Heart left ventricle (tissue), 16 donors: ENCODE measurements at regions of chr10 and their contacts with region 1.

Region 1: DNA sequence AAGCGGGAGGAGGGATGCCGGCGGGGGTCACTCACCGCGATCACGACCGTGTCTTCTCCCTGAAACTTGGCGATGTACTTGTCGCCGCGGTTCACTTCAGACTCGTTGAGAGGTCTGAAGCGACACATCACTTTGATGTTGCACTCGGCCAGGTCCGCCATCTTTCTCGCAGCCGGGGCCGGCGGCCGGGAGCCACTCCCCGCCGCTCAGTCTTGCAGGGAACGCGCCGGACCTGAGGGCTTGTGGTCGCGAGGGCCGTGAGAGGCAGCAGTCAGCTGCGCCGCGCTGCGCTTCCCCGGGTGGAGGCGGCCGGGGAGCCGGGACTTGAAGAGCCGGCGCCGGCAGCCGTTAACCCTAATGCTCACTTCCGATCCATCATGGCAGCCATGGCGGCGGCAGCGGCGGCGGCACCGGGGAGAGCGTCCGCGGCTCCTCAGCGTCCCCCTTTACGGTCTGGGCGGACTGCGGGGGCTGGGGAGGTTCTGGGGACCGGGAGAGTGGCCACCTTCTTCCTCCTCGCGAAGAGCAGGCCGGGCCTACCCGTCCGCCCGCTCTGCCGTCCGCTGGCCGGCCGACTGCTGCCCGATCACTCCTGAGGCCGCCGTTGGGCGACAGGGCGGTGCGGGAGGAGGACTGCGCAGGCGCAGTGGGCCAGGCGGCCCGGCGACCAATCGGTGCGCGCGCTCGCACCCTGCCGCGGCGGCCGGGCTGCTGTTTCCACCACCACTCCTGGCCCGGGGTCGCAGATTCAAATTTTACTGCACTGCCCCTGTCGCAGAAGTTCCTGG is at the start of gene KIF5B:
- DNase-seq: peak; percentile 90 to 97 (median 92)
- ATAC-seq: peak; percentile 83 to 96 (median 94)
- H3K4me3 ChIP-seq: peak within 1 kb of the TSS; percentile 61 to 95 (median 89)
- H3K27ac ChIP-seq: peak within 1 kb of the TSS; percentile 93 to 100 (median 98)
- H3K4me1 ChIP-seq: peaks cover 0 to 46% (median 32%) of the 10 kb centered on the region in 12 donors
- H3K27me3 ChIP-seq: no peaks in the 10 kb centered on the region
- CTCF ChIP-seq: peak in 3 of 12 donors; percentile 7 to 14 (median 8)
- POLR2A ChIP-seq: peak; percentile 91 to 97
- total RNA-seq, gene KIF5B: 108 to 178 (median 150) TPM

Region 2: GRCh38 chr10:31928549-31929260 is 127.3 kb before region 1 on chr10 and contains the start of gene ARHGAP12:
- intact Hi-C with region 1: loop called in 1 of 10 experiments (anchors 5 kb)
- DNase-seq: peak; percentile 92 to 96 (median 93)
- ATAC-seq: peak; percentile 88 to 97 (median 96)
- H3K4me3 ChIP-seq: peak within 1 kb of the TSS; percentile 66 to 97 (median 90)
- H3K27ac ChIP-seq: peak within 1 kb of the TSS; percentile 72 to 99 (median 96)
- H3K4me1 ChIP-seq: peaks cover 0 to 49% (median 28%) of the 10 kb centered on the region in 12 donors
- H3K27me3 ChIP-seq: no peaks in the 10 kb centered on the region
- CTCF ChIP-seq: peak in 2 of 12 donors; percentile 2 to 19
- POLR2A ChIP-seq: peak; percentile 78 to 95
- total RNA-seq, gene ARHGAP12: 17.6 to 27.6 (median 21.2) TPM

Region 3: GRCh38 chr10:32125023-32125422 is 69.0 kb after region 1 on chr10:
- intact Hi-C with region 1: no loop called
- DNase-seq: no peak
- ATAC-seq: no peak
- H3K4me3 ChIP-seq: no peak overlapping the region
- H3K27ac ChIP-seq: no peak overlapping the region
- H3K4me1 ChIP-seq: no peaks in the 10 kb centered on the region
- H3K27me3 ChIP-seq: no peaks in the 10 kb centered on the region
- CTCF ChIP-seq: no peak
- POLR2A ChIP-seq: no peak

Region 4: DNA sequence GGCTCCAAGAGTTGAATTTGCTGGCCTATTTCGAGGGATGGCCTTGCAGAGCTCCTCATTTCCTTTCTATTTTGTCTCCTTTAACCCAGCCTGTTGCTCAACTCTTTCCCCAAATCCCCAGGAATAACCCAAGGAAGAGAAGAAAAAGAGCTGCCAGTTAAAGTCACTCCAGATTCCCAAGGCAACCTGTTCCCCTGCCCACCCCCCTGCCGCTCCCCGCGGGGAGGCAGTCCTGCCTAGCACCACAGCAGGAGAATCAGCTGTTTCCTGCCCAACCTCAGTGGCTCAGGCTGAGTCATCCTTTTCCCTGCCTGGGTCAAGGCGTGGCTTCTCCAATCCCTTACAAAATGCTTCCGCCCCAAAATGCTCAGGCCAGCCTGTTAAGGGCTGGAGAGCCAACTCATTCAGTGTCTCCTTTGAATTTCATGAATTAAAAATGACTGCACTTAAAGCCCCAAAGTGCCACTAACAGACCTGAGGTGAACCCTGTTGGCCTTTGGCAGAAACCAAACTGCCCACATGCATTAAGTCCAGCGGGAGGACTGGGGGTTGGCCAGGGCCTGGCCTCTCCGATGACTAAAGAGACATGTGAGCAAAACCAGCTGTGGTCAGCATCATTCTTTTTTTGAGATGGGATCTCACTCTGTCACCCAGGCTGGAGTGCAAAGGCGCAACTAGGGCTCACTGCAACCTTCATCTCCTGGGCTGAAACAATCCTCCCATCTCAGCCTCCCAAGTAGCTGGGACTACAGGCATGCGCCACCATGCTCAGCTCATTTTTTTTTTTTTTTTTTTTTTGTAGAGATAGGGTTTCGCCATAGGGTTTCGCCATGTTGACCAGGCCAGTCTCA is 83.4 kb after region 1 on chr10:
- intact Hi-C with region 1: loop called in 4 of 10 experiments (anchors 5 to 10 kb)
- DNase-seq: peak; percentile 84 to 91 (median 87)
- ATAC-seq: peak; percentile 82 to 98 (median 94)
- H3K4me3 ChIP-seq: no peak overlapping the region
- H3K27ac ChIP-seq: peak overlapping the region in 11 of 12 donors; percentile 47 to 92 (median 71)
- H3K4me1 ChIP-seq: peaks cover 0 to 40% (median 19%) of the 10 kb centered on the region in 12 donors
- H3K27me3 ChIP-seq: no peaks in the 10 kb centered on the region
- CTCF ChIP-seq: peak in 5 of 12 donors; percentile 16 to 39 (median 33)
- POLR2A ChIP-seq: no peak

Region 5: DNA sequence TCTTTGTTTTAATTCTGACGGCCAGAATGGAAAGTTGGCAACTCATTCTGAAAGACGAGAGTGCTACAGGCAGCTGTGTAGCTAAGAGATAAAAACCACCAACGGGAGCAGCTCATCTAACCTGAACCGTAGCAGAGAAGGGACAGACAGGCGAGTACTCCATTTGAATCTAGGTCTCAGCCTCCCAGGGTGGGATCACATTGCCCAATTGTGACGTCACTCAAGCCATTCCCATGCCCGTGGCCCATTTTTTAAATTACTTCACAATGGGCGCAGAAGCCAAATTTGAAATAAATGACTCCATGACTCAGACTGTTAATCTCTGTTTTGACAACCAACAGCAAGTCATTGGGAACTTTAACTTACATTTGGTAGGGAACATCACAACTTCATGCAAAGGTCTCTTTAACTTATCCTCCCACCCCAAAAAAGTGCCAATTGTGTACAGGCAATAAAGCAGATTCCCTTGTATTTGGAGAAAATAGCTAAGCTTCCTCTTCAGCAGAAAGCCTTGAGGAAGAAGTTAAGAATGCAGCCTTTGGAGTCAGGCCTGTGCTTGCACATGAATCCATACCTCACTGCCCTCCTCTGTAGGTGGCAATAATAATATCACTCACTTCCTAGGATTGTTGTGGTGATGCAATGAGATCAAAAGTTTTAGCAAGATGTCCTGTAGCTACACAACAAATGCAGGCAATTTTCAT is 93.4 kb after region 1 on chr10:
- intact Hi-C with region 1: loop called in 4 of 10 experiments (anchors 5 to 10 kb)
- DNase-seq: peak in 4 of 5 donors; percentile 66 to 74 (median 68)
- ATAC-seq: peak; percentile 93 to 97 (median 96)
- H3K4me3 ChIP-seq: no peak overlapping the region
- H3K27ac ChIP-seq: peak overlapping the region in 11 of 12 donors; percentile 27 to 85 (median 70)
- H3K4me1 ChIP-seq: peaks cover 0 to 19% (median 10%) of the 10 kb centered on the region in 12 donors
- H3K27me3 ChIP-seq: no peaks in the 10 kb centered on the region
- CTCF ChIP-seq: no peak
- POLR2A ChIP-seq: no peak

Region 6: DNA sequence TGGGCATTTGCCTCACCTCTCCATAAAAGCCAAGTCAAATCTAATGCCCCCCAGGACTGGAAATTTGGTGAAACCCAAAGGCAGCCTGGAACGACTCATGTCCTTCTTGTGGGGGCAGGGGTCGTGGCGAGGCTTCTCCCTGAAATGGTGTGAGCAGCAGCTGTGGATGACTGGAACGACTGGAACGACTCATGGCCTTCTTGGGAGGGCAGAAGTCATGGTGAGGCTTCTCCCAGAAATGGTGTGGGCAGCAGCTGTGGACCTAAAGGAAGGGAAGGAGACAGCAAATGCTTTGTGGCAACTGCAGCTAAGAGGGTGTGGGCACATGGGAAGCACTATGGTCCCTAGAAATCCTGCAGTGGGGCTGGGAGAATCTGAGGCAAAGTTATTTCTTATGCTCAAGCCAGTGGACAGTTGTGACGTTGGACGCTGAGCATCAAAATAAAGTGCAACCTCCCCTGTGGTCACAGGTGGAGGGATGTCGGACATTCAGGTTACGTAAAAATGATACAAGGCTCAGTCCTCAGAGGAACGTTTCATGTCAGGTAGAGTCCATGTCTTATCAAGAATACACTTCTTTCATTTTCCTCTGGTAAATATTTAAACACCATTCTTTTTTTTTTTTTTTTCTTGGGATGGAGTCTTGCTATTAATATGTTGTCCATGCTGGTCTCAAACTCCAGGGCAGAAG is 107.2 kb after region 1 on chr10:
- intact Hi-C with region 1: loop called in 1 of 10 experiments (anchors 10 kb)
- DNase-seq: no peak
- ATAC-seq: no peak
- H3K4me3 ChIP-seq: no peak overlapping the region
- H3K27ac ChIP-seq: no peak overlapping the region
- H3K4me1 ChIP-seq: peaks cover 0 to 12% (median 0%) of the 10 kb centered on the region in 12 donors
- H3K27me3 ChIP-seq: no peaks in the 10 kb centered on the region
- CTCF ChIP-seq: no peak
- POLR2A ChIP-seq: no peak

Region 7: DNA sequence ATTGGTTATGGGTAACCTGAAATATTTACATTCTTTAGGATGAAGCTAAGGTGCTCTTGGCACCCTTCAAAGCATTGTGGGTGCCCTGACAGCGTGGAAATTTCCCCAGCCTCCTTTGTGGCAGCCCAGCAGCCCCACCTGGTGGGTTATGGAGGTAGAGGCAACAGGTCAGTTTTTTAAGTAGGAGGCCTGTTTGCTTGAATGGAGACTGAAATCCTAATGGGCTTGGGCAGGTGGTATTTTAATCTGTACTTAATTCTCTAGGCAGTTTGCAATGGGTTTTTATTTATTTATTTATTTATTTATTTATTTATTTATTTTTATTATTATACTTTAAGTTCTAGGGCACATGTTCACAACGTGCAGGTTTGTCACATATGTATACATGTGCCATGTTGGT is 151.5 kb after region 1 on chr10:
- intact Hi-C with region 1: loop called in 3 of 10 experiments (anchors 10 kb)
- DNase-seq: peak; percentile 20 to 63 (median 34)
- ATAC-seq: peak in 3 of 4 donors; percentile 42 to 83 (median 61)
- H3K4me3 ChIP-seq: no peak overlapping the region
- H3K27ac ChIP-seq: no peak overlapping the region
- H3K4me1 ChIP-seq: peaks cover 0 to 4% (median 0%) of the 10 kb centered on the region in 12 donors
- H3K27me3 ChIP-seq: no peaks in the 10 kb centered on the region
- CTCF ChIP-seq: peak; percentile 39 to 74 (median 58)
- POLR2A ChIP-seq: no peak

Region 8: GRCh38 chr10:32298054-32298812 is 242.2 kb after region 1 on chr10:
- intact Hi-C with region 1: no loop called
- DNase-seq: no peak
- ATAC-seq: no peak
- H3K4me3 ChIP-seq: no peak overlapping the region
- H3K27ac ChIP-seq: no peak overlapping the region
- H3K4me1 ChIP-seq: peaks cover 0 to 41% (median 9%) of the 10 kb centered on the region in 12 donors
- H3K27me3 ChIP-seq: no peaks in the 10 kb centered on the region
- CTCF ChIP-seq: no peak
- POLR2A ChIP-seq: no peak

Region 9: GRCh38 chr10:32378363-32379317 is 322.6 kb after region 1 on chr10:
- intact Hi-C with region 1: loop called in 2 of 10 experiments (anchors 10 kb)
- DNase-seq: peak; percentile 95 to 97 (median 96)
- ATAC-seq: peak; percentile 99 to 100 (median 99)
- H3K4me3 ChIP-seq: peak overlapping the region; percentile 35 to 78 (median 69)
- H3K27ac ChIP-seq: peak overlapping the region; percentile 43 to 94 (median 82)
- H3K4me1 ChIP-seq: peaks cover 0 to 31% (median 17%) of the 10 kb centered on the region in 12 donors
- H3K27me3 ChIP-seq: no peaks in the 10 kb centered on the region
- CTCF ChIP-seq: no peak
- POLR2A ChIP-seq: peak in 1 of 2 donors; percentile 36